PC-3 (cell line): ENCODE measurements at regions of chr5 and their contacts with region 1.

Region 1: GRCh38 chr5:81751009-81751835 is at the start of gene SSBP2:
- DNase-seq: peak; percentile 96
- ATAC-seq: peak; percentile 88
- H3K4me3 ChIP-seq: peak within 1 kb of the TSS; percentile 81
- H3K27ac ChIP-seq: peak within 1 kb of the TSS; percentile 65
- H3K4me1 ChIP-seq: peaks cover 18% of the 10 kb centered on the region
- H3K27me3 ChIP-seq: peaks cover 14% of the 10 kb centered on the region; the same call in 1 of the 2 replicates
- CTCF ChIP-seq: no peak
- total RNA-seq, gene SSBP2: 5.8 and 9.0 TPM in 2 replicates

Region 2: DNA sequence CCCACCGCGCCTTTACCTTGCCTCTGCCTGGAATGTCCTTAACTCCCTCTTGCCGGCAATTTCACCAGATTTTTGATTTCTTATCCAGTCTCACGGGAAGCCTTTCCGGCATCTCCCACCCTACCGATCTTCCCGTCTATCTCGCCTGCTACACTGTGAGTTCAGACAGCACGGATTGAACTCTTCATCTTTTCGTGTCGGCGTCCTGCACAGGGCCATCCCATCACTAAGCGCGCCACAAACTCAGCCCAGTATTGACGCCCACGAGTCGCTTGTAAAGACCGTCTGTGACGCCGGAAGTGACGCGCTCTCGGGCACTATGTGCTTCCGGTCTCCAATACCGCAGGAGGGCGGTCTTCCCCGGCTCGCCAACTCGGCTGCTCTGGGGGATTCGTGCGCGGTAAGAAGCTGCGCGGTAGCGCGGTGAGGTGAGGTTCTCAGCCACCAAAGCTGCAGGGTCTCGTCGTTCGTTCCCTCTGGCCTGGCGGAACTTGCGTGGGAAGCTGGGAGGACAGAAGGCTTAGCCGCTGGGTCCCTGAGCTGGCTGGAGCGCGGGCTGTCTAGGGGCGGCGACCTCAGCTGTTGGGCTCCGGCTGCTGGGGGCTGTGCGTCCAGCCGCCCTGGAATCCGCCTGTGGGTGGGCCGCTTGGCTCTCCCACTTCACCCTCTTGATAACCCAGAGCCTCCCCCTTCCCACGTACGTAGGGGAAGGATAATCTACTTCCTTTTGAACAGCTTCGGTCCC is 449.8 kb before region 1 on chr5 and contains the start of gene ZCCHC9:
- CTCF ChIA-PET with region 1: no interaction called
- POLR2A ChIA-PET with region 1: no interaction called
- intact Hi-C with region 1: loop called (anchors 5 kb)
- DNase-seq: peak; percentile 90
- ATAC-seq: peak; percentile 71
- H3K4me3 ChIP-seq: peak within 1 kb of the TSS; percentile 87
- H3K27ac ChIP-seq: peak within 1 kb of the TSS; percentile 95
- H3K4me1 ChIP-seq: peaks cover 39% of the 10 kb centered on the region
- H3K27me3 ChIP-seq: no peaks in the 10 kb centered on the region
- CTCF ChIP-seq: peak; percentile 11; the same call in 1 of the 2 replicates
- total RNA-seq, gene ZCCHC9: 19.4 and 22.7 TPM in 2 replicates

Region 3: GRCh38 chr5:81420039-81420667 is 331.1 kb before region 1 on chr5:
- CTCF ChIA-PET with region 1: no interaction called
- POLR2A ChIA-PET with region 1: interaction called, 3 read pairs
- intact Hi-C with region 1: loop called (anchors 1 kb)
- DNase-seq: peak; percentile 89
- ATAC-seq: peak; percentile 81
- H3K4me3 ChIP-seq: peak overlapping the region; percentile 21; the same call in 1 of the 2 replicates
- H3K27ac ChIP-seq: peak overlapping the region; percentile 99
- H3K4me1 ChIP-seq: peaks cover 65% of the 10 kb centered on the region
- H3K27me3 ChIP-seq: no peaks in the 10 kb centered on the region
- CTCF ChIP-seq: no peak

Region 4: DNA sequence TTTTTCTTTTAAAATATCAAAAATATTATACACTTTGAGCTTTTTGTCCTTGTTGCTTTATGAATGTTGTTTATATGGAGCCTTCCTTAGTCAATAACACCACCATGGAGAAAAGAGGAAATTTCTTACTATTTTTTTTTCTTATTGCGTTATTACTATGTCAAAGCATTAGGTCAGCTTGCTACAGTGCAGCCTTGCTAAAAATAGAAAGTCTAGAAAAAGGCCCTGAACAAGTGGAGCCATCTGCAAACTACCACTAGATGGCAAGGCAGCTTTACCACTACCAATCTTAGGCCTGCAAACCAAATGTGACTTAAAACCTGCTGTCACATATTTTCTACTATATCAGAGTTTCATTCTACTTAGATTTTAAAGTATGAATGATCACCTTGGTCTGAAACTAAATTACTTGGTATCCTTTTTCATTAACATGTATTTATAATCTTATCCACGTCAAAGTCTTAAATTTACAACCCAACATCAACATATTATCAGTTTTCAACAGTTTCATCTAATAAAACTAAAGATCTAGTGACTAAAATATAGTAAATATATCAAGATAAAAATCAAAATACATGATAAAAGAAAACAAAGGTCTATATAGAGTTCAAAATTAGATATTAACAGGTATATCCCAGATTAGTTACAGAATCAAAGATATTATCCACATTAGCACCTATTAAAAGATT is 244.2 kb before region 1 on chr5:
- CTCF ChIA-PET with region 1: no interaction called
- POLR2A ChIA-PET with region 1: no interaction called
- intact Hi-C with region 1: loop called (anchors 2 kb)
- DNase-seq: peak; percentile 65
- ATAC-seq: peak; percentile 96
- H3K4me3 ChIP-seq: no peak overlapping the region
- H3K27ac ChIP-seq: no peak overlapping the region
- H3K4me1 ChIP-seq: no peaks in the 10 kb centered on the region
- H3K27me3 ChIP-seq: no peaks in the 10 kb centered on the region
- CTCF ChIP-seq: peak; percentile 78

Region 5: GRCh38 chr5:81768667-81769452 is 17.6 kb after region 1 on chr5:
- CTCF ChIA-PET with region 1: interaction called, 5 read pairs
- POLR2A ChIA-PET with region 1: no interaction called
- intact Hi-C with region 1: loop called (anchors 1 kb)
- DNase-seq: peak; percentile 87
- ATAC-seq: peak; percentile 91
- H3K4me3 ChIP-seq: peak overlapping the region; percentile 23; the same call in 1 of the 2 replicates
- H3K27ac ChIP-seq: peak overlapping the region; percentile 59
- H3K4me1 ChIP-seq: peaks cover 10% of the 10 kb centered on the region
- H3K27me3 ChIP-seq: no peaks in the 10 kb centered on the region
- CTCF ChIP-seq: no peak

Region 6: GRCh38 chr5:81971712-81972495 is 220.7 kb after region 1 on chr5 and contains the start of gene ATG10:
- CTCF ChIA-PET with region 1: no interaction called
- POLR2A ChIA-PET with region 1: no interaction called
- intact Hi-C with region 1: loop called (anchors 2 kb)
- DNase-seq: peak; percentile 88
- ATAC-seq: peak; percentile 96
- H3K4me3 ChIP-seq: peak within 1 kb of the TSS; percentile 78
- H3K27ac ChIP-seq: peak within 1 kb of the TSS; percentile 89
- H3K4me1 ChIP-seq: peaks cover 12% of the 10 kb centered on the region; the same call in 1 of the 2 replicates
- H3K27me3 ChIP-seq: no peaks in the 10 kb centered on the region
- CTCF ChIP-seq: no peak
- total RNA-seq, gene ATG10: 11.7 and 11.8 TPM in 2 replicates

Region 7: GRCh38 chr5:82165740-82166530 is 414.7 kb after region 1 on chr5:
- CTCF ChIA-PET with region 1: interaction called, 7 read pairs
- POLR2A ChIA-PET with region 1: no interaction called
- intact Hi-C with region 1: loop called (anchors 1 kb)
- DNase-seq: peak; percentile 73
- ATAC-seq: peak; percentile 78
- H3K4me3 ChIP-seq: no peak overlapping the region
- H3K27ac ChIP-seq: peak overlapping the region; percentile 68; the same call in 1 of the 2 replicates
- H3K4me1 ChIP-seq: peaks cover 28% of the 10 kb centered on the region
- H3K27me3 ChIP-seq: no peaks in the 10 kb centered on the region
- CTCF ChIP-seq: peak; percentile 88